ENCODE measurements at regions of chr19 and their contacts with region 1.

Region 1: DNA sequence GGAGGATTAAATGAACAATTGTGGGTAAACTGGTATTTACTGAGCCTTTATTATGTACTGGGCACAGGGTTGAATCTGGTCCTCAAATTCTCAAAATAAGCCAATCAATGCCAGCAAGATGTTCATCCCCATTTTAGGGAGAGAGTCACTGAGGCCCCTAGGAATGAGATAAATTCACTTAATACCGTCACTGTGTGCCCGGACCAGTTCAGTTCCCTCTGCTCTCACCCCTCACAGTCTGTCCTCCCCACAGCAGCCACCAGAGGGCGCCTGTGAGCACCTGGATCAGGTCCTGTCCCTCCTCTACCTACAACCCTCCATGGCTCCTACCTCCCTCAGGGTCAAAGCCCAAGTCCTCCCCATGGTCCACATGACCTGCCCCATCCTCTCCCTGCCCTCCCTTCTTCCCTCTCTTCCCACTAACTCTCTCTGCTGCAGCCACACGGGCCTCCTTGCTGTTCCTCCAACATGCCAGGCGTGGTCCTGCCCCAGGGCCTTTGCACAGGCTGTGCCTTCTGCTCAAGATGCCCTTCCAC is 42.0 kb upstream of the NFIC start:
- DNase-seq: peak; percentile 86
- ATAC-seq: peak; percentile 86
- H3K4me3 ChIP-seq: no peak overlapping the region
- H3K27ac ChIP-seq: no peak overlapping the region
- H3K4me1 ChIP-seq: no peaks in the 10 kb centered on the region
- H3K27me3 ChIP-seq: peaks cover 16% of the 10 kb centered on the region
- CTCF ChIP-seq: peak; percentile 86

Region 2: GRCh38 chr19:3366753-3367627 is 42.6 kb after region 1 on chr19:
- intact Hi-C with region 1: no loop called
- DNase-seq: peak; percentile 85
- ATAC-seq: peak; percentile 60
- H3K4me3 ChIP-seq: peak overlapping the region; percentile 78
- H3K27ac ChIP-seq: peak overlapping the region; percentile 93
- H3K4me1 ChIP-seq: peaks cover 33% of the 10 kb centered on the region
- H3K27me3 ChIP-seq: no peaks in the 10 kb centered on the region
- CTCF ChIP-seq: no peak

Region 3: GRCh38 chr19:3434712-3435553 is 110.5 kb after region 1 on chr19:
- intact Hi-C with region 1: loop called (anchors 5 kb)
- DNase-seq: peak; percentile 98
- ATAC-seq: peak; percentile 99
- H3K4me3 ChIP-seq: peak overlapping the region; percentile 55
- H3K27ac ChIP-seq: peak overlapping the region; percentile 84
- H3K4me1 ChIP-seq: peaks cover 20% of the 10 kb centered on the region
- H3K27me3 ChIP-seq: no peaks in the 10 kb centered on the region
- CTCF ChIP-seq: no peak

Region 4: DNA sequence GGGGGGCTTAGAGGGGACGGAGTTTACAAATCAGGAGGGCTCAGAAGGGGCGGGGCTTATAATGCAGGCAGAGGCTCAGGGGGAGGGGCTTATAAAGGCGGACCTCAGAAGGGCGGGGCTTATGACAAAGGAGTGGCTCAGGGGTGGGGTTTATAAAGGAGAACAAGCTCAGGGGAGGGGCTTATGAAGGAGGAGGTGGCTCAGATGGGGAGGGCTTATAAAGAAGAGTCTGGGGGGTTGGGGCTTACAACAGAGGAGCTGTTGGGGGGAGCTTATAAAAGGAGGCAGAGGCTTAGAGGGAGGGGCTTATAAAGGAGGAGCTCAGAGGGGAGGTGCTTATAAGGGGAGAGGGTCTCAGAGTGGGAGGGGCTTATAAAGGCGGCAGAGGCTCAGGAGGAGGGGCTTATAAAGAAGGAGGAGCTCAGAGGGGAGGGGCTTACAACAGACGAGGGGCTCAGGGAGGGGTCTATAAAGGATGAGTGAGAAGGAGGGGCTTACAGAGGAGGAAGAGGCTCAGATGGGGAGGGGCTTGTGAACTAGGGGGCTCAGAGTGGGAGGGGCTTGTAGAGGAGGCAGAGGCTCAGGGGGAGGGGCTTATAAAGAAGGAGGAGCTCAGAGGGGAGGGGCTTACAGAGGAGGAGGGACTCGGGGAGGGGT is 154.9 kb after region 1 on chr19:
- intact Hi-C with region 1: loop called (anchors 5 kb)
- DNase-seq: no peak
- ATAC-seq: peak; percentile 52
- H3K4me3 ChIP-seq: no peak overlapping the region
- H3K27ac ChIP-seq: no peak overlapping the region
- H3K4me1 ChIP-seq: no peaks in the 10 kb centered on the region
- H3K27me3 ChIP-seq: peaks cover 42% of the 10 kb centered on the region
- CTCF ChIP-seq: no peak